A673 (cell line): ENCODE measurements at regions of chr7 and their contacts with region 1.

Region 1: DNA sequence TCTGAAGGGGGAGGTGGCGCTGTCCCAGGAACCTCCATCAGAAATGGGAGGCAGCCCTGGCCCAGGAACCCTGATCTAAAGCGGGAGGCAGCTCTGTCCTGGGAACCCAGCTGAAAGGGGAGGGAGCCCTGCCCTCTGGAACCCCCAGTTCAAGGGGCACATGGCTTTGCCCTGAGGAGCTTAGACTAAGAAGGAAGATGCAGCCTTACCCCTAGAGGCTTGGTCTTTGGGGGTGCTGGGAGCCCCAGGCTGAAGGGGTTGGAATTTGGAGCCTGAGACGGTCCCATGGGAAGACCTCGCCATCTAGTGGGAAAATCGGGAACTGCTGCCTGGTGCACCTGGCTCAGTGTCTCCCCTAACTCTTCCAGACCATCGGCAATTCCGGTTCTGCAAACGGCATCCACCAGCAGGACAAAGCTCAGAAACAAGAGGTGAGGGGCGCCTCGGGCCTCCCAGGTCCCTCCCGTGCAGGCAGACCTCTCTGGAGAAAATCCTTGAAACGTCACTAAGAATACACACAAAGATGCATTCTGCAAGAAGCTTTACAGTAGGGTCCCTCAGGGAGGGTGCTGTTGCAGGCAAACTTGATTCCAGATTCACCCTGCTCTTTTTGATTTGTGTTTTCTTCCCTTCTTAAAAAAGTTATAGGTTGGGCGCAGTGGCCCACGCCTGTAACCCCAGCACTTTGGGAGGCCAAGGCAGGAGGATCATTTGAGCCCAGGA is 52.4 kb upstream of the GTF2IRD1 start:
- DNase-seq: peak; percentile 80
- H3K4me3 ChIP-seq: no peak overlapping the region
- H3K27ac ChIP-seq: no peak overlapping the region
- H3K4me1 ChIP-seq: no peaks in the 10 kb centered on the region
- H3K27me3 ChIP-seq: no peaks in the 10 kb centered on the region
- CTCF ChIP-seq: peak; percentile 98

Region 2: GRCh38 chr7:73865738-73866445 is 535.4 kb before region 1 on chr7:
- CTCF ChIA-PET with region 1: no interaction called
- POLR2A ChIA-PET with region 1: no interaction called
- intact Hi-C with region 1: loop called (anchors 10 kb)
- DNase-seq: peak; percentile 58
- H3K4me3 ChIP-seq: no peak overlapping the region
- H3K27ac ChIP-seq: no peak overlapping the region
- H3K4me1 ChIP-seq: no peaks in the 10 kb centered on the region
- H3K27me3 ChIP-seq: no peaks in the 10 kb centered on the region
- CTCF ChIP-seq: peak; percentile 60

Region 3: GRCh38 chr7:74068393-74069085 is 332.8 kb before region 1 on chr7:
- CTCF ChIA-PET with region 1: interaction called, 3 read pairs
- POLR2A ChIA-PET with region 1: no interaction called
- intact Hi-C with region 1: loop called (anchors 5 kb)
- DNase-seq: no peak
- H3K4me3 ChIP-seq: no peak overlapping the region
- H3K27ac ChIP-seq: no peak overlapping the region
- H3K4me1 ChIP-seq: no peaks in the 10 kb centered on the region
- H3K27me3 ChIP-seq: no peaks in the 10 kb centered on the region
- CTCF ChIP-seq: no peak

Region 4: DNA sequence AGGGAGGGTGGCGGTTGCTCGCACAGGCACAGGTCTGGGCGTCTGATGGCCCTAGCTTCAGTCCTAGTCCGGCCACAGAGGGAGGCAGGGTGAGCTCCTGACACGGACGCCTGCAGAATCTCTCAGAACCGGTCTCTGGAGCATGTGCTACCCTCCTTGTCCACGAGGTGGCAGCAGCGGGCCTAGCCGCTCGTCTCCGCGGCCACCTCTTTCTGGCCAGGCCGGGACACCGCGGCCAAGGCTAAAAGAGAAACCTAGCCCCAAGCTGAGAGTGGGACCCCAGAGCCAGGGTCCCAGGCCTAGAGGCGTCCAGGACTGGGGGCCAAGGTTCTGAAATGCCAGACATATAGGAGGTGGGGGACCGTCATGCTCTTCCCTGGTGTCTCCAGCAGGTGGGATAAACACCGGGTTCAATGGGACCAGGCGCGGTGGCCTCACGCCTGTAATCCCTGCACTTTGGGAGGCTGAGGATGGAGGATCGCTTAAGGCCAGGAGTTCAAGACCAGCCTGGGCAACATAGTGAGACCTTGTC is 194.6 kb before region 1 on chr7:
- CTCF ChIA-PET with region 1: interaction called, 50 read pairs
- POLR2A ChIA-PET with region 1: no interaction called
- intact Hi-C with region 1: loop called (anchors 1 kb)
- DNase-seq: peak; percentile 69
- H3K4me3 ChIP-seq: peak overlapping the region; percentile 40
- H3K27ac ChIP-seq: no peak overlapping the region
- H3K4me1 ChIP-seq: no peaks in the 10 kb centered on the region
- H3K27me3 ChIP-seq: no peaks in the 10 kb centered on the region
- CTCF ChIP-seq: peak; percentile 99

Region 5: DNA sequence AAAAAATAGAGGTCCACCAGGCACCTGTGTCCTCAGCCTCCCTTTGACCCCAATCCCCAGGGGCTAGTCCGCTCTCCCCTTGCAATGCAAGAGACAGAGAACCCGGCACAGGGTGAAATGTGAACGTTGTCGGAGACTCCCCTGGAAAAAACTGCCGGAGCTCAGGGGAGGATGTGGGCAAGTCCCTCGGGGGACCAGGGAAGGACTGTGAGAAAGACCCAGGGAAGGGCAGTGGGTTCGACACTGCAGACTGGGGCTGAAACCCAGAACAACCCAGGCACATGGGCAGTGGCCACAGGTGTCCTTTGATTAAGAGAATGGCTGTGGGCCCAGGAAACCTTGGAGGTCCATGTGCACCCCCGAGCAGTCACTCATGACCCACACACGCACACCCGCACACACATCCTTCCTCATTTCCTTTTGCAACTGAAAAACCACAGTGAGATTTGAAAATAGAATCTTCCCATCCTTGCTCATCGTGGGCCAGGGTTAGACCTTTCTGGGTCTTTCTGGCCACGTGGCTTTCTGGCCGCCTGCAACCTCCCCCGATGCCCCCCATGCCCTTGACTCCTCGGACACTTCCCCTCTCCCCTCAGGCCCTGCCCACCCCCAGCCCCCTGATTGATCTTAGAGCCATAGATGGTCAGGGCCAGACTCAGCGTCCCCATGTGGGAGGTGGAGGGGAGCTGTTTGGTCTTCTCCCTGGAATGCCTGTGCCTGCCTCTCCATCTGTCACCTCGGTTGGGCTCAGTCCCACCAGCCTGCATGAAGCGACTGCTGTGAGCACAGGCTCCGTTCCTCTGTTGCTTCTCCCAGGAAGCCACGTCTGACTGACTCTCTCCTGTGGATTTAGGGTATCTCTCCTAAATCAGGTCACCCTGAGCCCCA is 183.6 kb before region 1 on chr7:
- CTCF ChIA-PET with region 1: no interaction called
- POLR2A ChIA-PET with region 1: interaction called, 17 read pairs
- intact Hi-C with region 1: no loop called
- DNase-seq: no peak
- H3K4me3 ChIP-seq: no peak overlapping the region
- H3K27ac ChIP-seq: no peak overlapping the region
- H3K4me1 ChIP-seq: no peaks in the 10 kb centered on the region
- H3K27me3 ChIP-seq: no peaks in the 10 kb centered on the region
- CTCF ChIP-seq: no peak